ENCODE measurements at regions of chr6 and their contacts with region 1.

Region 1: DNA sequence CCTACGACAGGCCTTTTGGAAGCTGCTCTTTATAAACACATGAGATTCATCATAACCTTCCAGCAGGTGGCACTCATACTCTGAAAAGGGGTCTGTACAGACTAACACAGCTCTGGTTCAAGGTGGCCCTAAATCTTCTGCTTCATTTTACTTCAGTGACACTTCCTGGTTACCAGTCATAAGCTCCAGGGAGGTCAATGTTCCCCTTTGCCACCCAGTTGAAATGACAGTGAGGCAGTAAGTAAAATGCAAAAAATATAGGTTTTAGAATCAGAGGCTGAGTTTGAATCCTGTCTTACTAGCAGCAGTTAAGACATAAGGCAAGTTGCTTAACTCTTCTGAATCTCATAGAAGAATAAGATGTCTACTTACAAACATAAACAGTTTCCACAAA is 132.8 kb downstream of the CDK19 start:
- DNase-seq: peak; percentile 18 to 89 (median 63)
- ATAC-seq: peak; percentile 99
- H3K4me3 ChIP-seq: no peak overlapping the region
- H3K4me3 Mint-ChIP-seq: no peak overlapping the region
- H3K27ac ChIP-seq: no peak overlapping the region
- H3K27ac Mint-ChIP-seq: peak overlapping the region; percentile 20
- H3K4me1 ChIP-seq: peaks cover 8% of the 10 kb centered on the region
- H3K4me1 Mint-ChIP-seq: peaks cover 16% of the 10 kb centered on the region
- H3K27me3 ChIP-seq: no peaks in the 10 kb centered on the region
- H3K27me3 Mint-ChIP-seq: no peaks in the 10 kb centered on the region
- CTCF ChIP-seq: peak; percentile 67

Region 2: GRCh38 chr6:109397020-109397419 is 1285.4 kb before region 1 on chr6:
- CTCF ChIA-PET with region 1: no interaction called
- POLR2A ChIA-PET with region 1: no interaction called
- intact Hi-C with region 1: no loop called
- DNase-seq: no peak
- ATAC-seq: no peak
- H3K4me3 ChIP-seq: no peak overlapping the region
- H3K4me3 Mint-ChIP-seq: no peak overlapping the region
- H3K27ac ChIP-seq: no peak overlapping the region
- H3K27ac Mint-ChIP-seq: no peak overlapping the region
- H3K4me1 ChIP-seq: no peaks in the 10 kb centered on the region
- H3K4me1 Mint-ChIP-seq: peaks cover 3% of the 10 kb centered on the region
- H3K27me3 ChIP-seq: no peaks in the 10 kb centered on the region
- H3K27me3 Mint-ChIP-seq: no peaks in the 10 kb centered on the region
- CTCF ChIP-seq: no peak

Region 3: DNA sequence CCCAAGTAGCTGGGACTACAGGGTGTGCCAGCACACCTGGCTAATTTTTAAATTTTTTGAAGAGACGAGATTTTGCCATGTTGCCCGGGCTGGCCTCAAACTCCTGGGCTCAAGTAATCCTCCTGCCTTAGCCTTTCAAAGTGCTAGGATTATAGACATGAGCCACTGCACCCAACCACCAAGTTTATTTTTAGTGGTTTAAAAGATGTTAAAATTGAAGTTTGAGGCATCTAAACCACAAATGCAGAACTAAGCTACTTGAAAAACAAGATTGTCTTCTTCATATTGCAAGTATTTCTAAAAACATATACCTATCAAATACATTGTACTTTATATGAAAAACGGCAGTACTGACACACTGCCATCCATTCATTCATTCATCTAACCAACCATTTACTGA is 534.6 kb before region 1 on chr6:
- CTCF ChIA-PET with region 1: no interaction called
- POLR2A ChIA-PET with region 1: no interaction called
- intact Hi-C with region 1: no loop called
- DNase-seq: no peak
- ATAC-seq: no peak
- H3K4me3 ChIP-seq: no peak overlapping the region
- H3K4me3 Mint-ChIP-seq: no peak overlapping the region
- H3K27ac ChIP-seq: no peak overlapping the region
- H3K27ac Mint-ChIP-seq: no peak overlapping the region
- H3K4me1 ChIP-seq: no peaks in the 10 kb centered on the region
- H3K4me1 Mint-ChIP-seq: no peaks in the 10 kb centered on the region
- H3K27me3 ChIP-seq: no peaks in the 10 kb centered on the region
- H3K27me3 Mint-ChIP-seq: no peaks in the 10 kb centered on the region
- CTCF ChIP-seq: no peak

Region 4: GRCh38 chr6:110714143-110714542 is 31.7 kb after region 1 on chr6:
- CTCF ChIA-PET with region 1: no interaction called
- POLR2A ChIA-PET with region 1: no interaction called
- intact Hi-C with region 1: no loop called
- DNase-seq: no peak
- ATAC-seq: no peak
- H3K4me3 ChIP-seq: no peak overlapping the region
- H3K4me3 Mint-ChIP-seq: no peak overlapping the region
- H3K27ac ChIP-seq: no peak overlapping the region
- H3K27ac Mint-ChIP-seq: no peak overlapping the region
- H3K4me1 ChIP-seq: no peaks in the 10 kb centered on the region
- H3K4me1 Mint-ChIP-seq: no peaks in the 10 kb centered on the region
- H3K27me3 ChIP-seq: no peaks in the 10 kb centered on the region
- H3K27me3 Mint-ChIP-seq: no peaks in the 10 kb centered on the region
- CTCF ChIP-seq: no peak

Region 5: GRCh38 chr6:110882271-110882613 is 199.8 kb after region 1 on chr6:
- CTCF ChIA-PET with region 1: interaction called, 52 read pairs
- POLR2A ChIA-PET with region 1: interaction called, 3 read pairs
- intact Hi-C with region 1: loop called (anchors 1 kb)
- DNase-seq: no peak
- ATAC-seq: no peak
- H3K4me3 ChIP-seq: no peak overlapping the region
- H3K4me3 Mint-ChIP-seq: peak overlapping the region; percentile 8
- H3K27ac ChIP-seq: no peak overlapping the region
- H3K27ac Mint-ChIP-seq: peak overlapping the region; percentile 45
- H3K4me1 ChIP-seq: peaks cover 92% of the 10 kb centered on the region
- H3K4me1 Mint-ChIP-seq: peaks cover 93% of the 10 kb centered on the region
- H3K27me3 ChIP-seq: no peaks in the 10 kb centered on the region
- H3K27me3 Mint-ChIP-seq: no peaks in the 10 kb centered on the region
- CTCF ChIP-seq: no peak

Region 6: GRCh38 chr6:110949679-110950285 is 267.3 kb after region 1 on chr6:
- CTCF ChIA-PET with region 1: interaction called, 52 read pairs
- POLR2A ChIA-PET with region 1: interaction called, 3 read pairs
- intact Hi-C with region 1: loop called (anchors 1 kb)
- DNase-seq: peak in 2 of 9 experiments; percentile 48 to 64
- ATAC-seq: peak; percentile 46
- H3K4me3 ChIP-seq: no peak overlapping the region
- H3K4me3 Mint-ChIP-seq: no peak overlapping the region
- H3K27ac ChIP-seq: no peak overlapping the region
- H3K27ac Mint-ChIP-seq: no peak overlapping the region
- H3K4me1 ChIP-seq: peaks cover 5% of the 10 kb centered on the region
- H3K4me1 Mint-ChIP-seq: peaks cover 4% of the 10 kb centered on the region
- H3K27me3 ChIP-seq: no peaks in the 10 kb centered on the region
- H3K27me3 Mint-ChIP-seq: peaks cover 5% of the 10 kb centered on the region
- CTCF ChIP-seq: peak; percentile 58

Region 7: GRCh38 chr6:110981202-110981600 is 298.7 kb after region 1 on chr6:
- CTCF ChIA-PET with region 1: interaction called, 10 read pairs
- POLR2A ChIA-PET with region 1: interaction called, 5 read pairs
- intact Hi-C with region 1: no loop called
- DNase-seq: peak in 1 of 9 experiments; percentile 49
- ATAC-seq: peak; percentile 1
- H3K4me3 ChIP-seq: peak overlapping the region; percentile 85 to 95
- H3K4me3 Mint-ChIP-seq: peak overlapping the region; percentile 99
- H3K27ac ChIP-seq: peak overlapping the region; percentile 90 to 97
- H3K27ac Mint-ChIP-seq: peak overlapping the region; percentile 100
- H3K4me1 ChIP-seq: peaks cover 6% of the 10 kb centered on the region
- H3K4me1 Mint-ChIP-seq: peaks cover 45% of the 10 kb centered on the region
- H3K27me3 ChIP-seq: no peaks in the 10 kb centered on the region
- H3K27me3 Mint-ChIP-seq: no peaks in the 10 kb centered on the region
- CTCF ChIP-seq: no peak